ENCODE measurements at regions of chr12 and their contacts with region 1.

Region 1: GRCh38 chr12:95998611-95999286 is 2.6 kb upstream of the HAL start:
- DNase-seq: peak; percentile 48
- H3K4me3 ChIP-seq: no peak overlapping the region
- H3K27ac ChIP-seq: no peak overlapping the region
- H3K4me1 ChIP-seq: no peaks in the 10 kb centered on the region
- H3K27me3 ChIP-seq: no peaks in the 10 kb centered on the region
- CTCF ChIP-seq: peak; percentile 57

Region 2: DNA sequence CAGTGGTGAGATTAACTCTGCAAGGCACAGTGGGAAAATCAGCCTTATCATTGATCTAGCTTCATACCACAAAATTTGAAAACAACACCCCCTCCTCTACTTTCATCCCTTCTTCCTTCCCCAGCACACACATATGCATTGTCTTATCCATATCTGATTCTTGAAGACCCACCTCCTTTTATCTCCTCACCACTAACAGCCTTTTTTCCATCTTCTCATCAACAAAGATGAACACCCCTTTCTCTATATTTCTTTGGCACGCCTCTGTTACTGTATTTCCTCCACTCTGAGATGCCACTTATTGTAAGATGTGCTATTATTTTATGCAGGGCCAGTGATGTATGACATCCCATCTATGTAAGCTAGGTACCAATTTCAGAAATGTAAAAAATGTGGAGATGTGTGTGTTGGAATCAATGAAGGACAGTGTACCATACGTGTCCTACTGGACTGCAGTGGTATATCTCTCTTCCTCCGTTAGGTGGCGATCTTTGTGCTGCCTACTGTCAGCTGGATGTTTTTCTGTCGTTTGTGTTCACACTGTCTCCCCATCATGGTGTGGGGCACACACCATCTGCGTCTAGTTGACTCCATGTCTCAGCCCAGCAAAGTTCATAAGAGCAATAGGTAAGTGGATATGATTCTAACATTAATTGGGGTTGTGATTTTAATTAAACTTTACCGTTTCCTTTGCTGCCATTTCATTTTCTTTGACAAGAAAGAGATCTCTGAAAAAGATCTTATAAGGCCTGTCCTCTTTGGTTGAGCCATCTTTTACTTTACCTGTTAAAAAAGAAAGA is 80.4 kb before region 1 on chr12:
- intact Hi-C with region 1: loop called (anchors 2 kb)
- DNase-seq: peak; percentile 28
- H3K4me3 ChIP-seq: no peak overlapping the region
- H3K27ac ChIP-seq: no peak overlapping the region
- H3K4me1 ChIP-seq: no peaks in the 10 kb centered on the region
- H3K27me3 ChIP-seq: no peaks in the 10 kb centered on the region
- CTCF ChIP-seq: peak; percentile 69